Ascending aorta (tissue), 2 donors: ENCODE measurements at regions of chr20 and their contacts with region 1.

Region 1: GRCh38 chr20:13671916-13672378 is 33.2 kb upstream of the TASP1 start:
- DNase-seq: peak in 1 of 2 donors; percentile 87
- H3K4me3 ChIP-seq: no peak overlapping the region
- H3K27ac ChIP-seq: peak overlapping the region; percentile 82 to 83
- H3K4me1 ChIP-seq: peaks cover 16 to 30% of the 10 kb centered on the region in 2 donors
- H3K27me3 ChIP-seq: no peaks in the 10 kb centered on the region
- CTCF ChIP-seq: no peak

Region 2: DNA sequence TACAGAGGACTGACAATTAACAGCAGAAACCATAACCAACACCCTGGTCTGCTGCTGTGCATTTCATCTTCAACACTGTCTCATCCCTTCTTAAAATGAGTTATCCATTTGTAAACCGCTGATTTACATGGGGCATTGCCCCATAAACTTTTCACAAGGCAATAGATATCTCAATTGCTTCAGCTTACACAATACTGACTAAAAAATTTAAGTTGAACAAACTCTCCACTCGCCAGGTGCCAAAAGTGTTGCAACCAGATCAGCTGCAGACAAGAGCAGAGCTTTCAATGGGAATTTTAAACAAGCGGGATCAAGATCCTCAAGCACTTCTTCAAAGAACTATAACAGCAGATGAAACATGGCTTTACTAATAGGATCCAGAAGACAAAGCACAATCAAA is 216.2 kb before region 1 on chr20:
- intact Hi-C with region 1: no loop called
- DNase-seq: no peak
- H3K4me3 ChIP-seq: no peak overlapping the region
- H3K27ac ChIP-seq: no peak overlapping the region
- H3K4me1 ChIP-seq: no peaks in the 10 kb centered on the region
- H3K27me3 ChIP-seq: no peaks in the 10 kb centered on the region
- CTCF ChIP-seq: no peak

Region 3: GRCh38 chr20:13492001-13492481 is 179.9 kb before region 1 on chr20:
- intact Hi-C with region 1: loop called (anchors 5 kb)
- DNase-seq: peak in 1 of 2 donors; percentile 73
- H3K4me3 ChIP-seq: no peak overlapping the region
- H3K27ac ChIP-seq: peak overlapping the region; percentile 68 to 72
- H3K4me1 ChIP-seq: peaks cover 7 to 27% of the 10 kb centered on the region in 2 donors
- H3K27me3 ChIP-seq: no peaks in the 10 kb centered on the region
- CTCF ChIP-seq: peak in 1 of 3 experiments; percentile 9

Region 4: GRCh38 chr20:13610184-13610583 is 61.8 kb before region 1 on chr20:
- intact Hi-C with region 1: loop called (anchors 10 kb)
- DNase-seq: no peak
- H3K4me3 ChIP-seq: no peak overlapping the region
- H3K27ac ChIP-seq: no peak overlapping the region
- H3K4me1 ChIP-seq: peaks cover 3 to 12% of the 10 kb centered on the region in 2 donors
- H3K27me3 ChIP-seq: no peaks in the 10 kb centered on the region
- CTCF ChIP-seq: peak in 1 of 3 experiments; percentile 6

Region 5: DNA sequence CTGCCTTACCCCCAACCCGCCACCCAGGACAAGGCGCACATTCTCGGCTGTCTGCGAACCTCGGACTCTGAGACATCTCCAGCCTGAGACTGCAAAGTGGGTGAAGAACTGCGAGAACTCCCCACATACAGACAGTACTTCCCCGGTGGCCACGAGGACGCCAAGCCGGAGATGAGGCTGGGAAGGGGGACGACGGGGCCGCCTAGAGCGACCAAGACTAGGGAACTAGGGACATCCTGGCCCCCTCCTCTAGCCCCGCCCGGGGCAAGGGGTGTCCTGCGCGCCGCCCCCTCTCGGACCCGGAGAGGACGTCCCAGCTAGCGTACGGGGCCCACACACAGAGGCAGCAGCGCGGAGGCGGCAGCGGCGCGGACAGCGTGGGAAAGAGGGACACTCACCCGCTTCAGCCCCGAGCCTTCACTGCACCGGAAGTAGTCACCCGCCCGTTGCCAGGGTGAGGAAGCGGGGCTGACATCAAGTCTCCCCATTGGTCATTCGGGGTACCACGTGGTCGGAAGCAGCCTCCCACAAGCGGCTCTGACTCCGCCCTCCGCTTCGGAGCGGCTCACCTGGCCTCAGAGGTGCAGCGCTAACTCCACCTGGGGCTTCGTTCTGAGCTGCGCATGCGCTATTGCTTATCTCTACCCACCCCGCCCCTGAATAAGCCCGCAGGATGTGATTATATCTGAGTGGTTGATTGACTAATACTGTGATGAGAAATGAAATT is 33.3 kb before region 1 on chr20 and contains the start of gene TASP1:
- intact Hi-C with region 1: loop called (anchors 5 kb)
- DNase-seq: peak; percentile 83 to 98
- H3K4me3 ChIP-seq: peak within 1 kb of the TSS; percentile 85
- H3K27ac ChIP-seq: peak within 1 kb of the TSS; percentile 74 to 77
- H3K4me1 ChIP-seq: peaks cover 0 to 7% of the 10 kb centered on the region in 2 donors
- H3K27me3 ChIP-seq: no peaks in the 10 kb centered on the region
- CTCF ChIP-seq: no peak
- total RNA-seq, gene TASP1: 17.2 TPM

Region 6: GRCh38 chr20:13700761-13701160 is 28.8 kb after region 1 on chr20:
- intact Hi-C with region 1: loop called (anchors 2 kb)
- DNase-seq: no peak
- H3K4me3 ChIP-seq: no peak overlapping the region
- H3K27ac ChIP-seq: peak overlapping the region; percentile 55 to 76
- H3K4me1 ChIP-seq: peaks cover 0 to 19% of the 10 kb centered on the region in 2 donors
- H3K27me3 ChIP-seq: no peaks in the 10 kb centered on the region
- CTCF ChIP-seq: no peak

Region 7: DNA sequence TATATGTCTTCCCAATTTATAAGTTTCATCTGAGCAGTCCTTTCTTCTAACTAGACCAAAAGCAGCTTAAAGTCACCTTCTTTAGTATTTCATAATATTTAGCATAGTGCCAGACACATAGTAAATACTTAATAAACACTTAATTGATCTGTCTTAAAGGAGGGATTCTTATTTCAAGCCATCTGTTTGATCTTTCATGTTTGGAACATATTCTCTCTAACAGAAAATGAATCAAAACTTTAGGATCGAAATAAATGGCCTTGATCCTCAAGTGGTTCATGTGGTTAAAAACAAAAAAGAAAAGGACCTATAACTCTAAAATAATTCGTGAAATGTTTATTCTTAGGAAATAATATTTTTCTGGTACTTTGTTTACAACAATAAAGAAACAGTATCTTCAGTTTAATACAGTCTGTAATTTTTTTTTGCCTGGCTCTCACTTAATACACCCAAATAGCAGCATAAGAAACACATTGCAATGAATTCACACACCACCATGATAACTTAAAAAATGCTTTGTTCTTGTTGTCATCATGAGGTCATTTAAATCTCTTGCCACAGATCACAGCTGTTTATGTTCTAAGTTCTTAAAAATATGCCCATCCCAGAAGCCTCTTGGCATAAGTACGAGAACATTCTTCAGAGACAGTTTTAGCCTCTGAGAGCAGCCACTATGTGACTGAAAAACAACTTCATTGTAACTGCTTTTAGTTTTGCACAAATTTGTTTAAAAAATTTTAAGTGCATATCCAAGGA is 64.7 kb after region 1 on chr20:
- intact Hi-C with region 1: loop called (anchors 1 kb)
- DNase-seq: no peak
- H3K4me3 ChIP-seq: no peak overlapping the region
- H3K27ac ChIP-seq: peak overlapping the region; percentile 85 to 88
- H3K4me1 ChIP-seq: peaks cover 0 to 39% of the 10 kb centered on the region in 2 donors
- H3K27me3 ChIP-seq: no peaks in the 10 kb centered on the region
- CTCF ChIP-seq: no peak